A549 (cell line): ENCODE measurements at regions of chr2 and their contacts with region 1.

Region 1: GRCh38 chr2:37414470-37414949 is 70.1 kb downstream of the QPCT start:
- DNase-seq: peak; percentile 68 to 69
- ATAC-seq: peak; percentile 90 to 93
- H3K4me3 ChIP-seq: no peak overlapping the region
- H3K27ac ChIP-seq: peak overlapping the region; percentile 8 to 15; a peak in 2 of 6 replicates
- H3K4me1 ChIP-seq: peaks cover 6% of the 10 kb centered on the region; the same call in 2 of the 3 replicates
- CTCF ChIP-seq: peak; percentile 99
- EP300 ChIP-seq: no peak
- POLR2A ChIP-seq: no peak
- RAD21 ChIP-seq: peak; percentile 99

Region 2: GRCh38 chr2:37344453-37345361 is 69.8 kb before region 1 on chr2 and contains the start of gene QPCT:
- CTCF ChIA-PET with region 1: no interaction called
- POLR2A ChIA-PET with region 1: no interaction called
- DNase-seq: peak; percentile 60 to 87
- ATAC-seq: peak; percentile 83 to 87
- H3K4me3 ChIP-seq: peak within 1 kb of the TSS; percentile 71
- H3K27ac ChIP-seq: peak within 1 kb of the TSS; percentile 69 to 87
- H3K4me1 ChIP-seq: peaks cover 19% of the 10 kb centered on the region
- CTCF ChIP-seq: no peak
- EP300 ChIP-seq: no peak
- POLR2A ChIP-seq: peak; percentile 32; the same call in 1 of the 2 replicates
- RAD21 ChIP-seq: no peak; a peak in 1 of 5 replicates
- polyA plus RNA-seq, gene QPCT: 42.7 and 68.7 TPM in 2 replicates

Region 3: DNA sequence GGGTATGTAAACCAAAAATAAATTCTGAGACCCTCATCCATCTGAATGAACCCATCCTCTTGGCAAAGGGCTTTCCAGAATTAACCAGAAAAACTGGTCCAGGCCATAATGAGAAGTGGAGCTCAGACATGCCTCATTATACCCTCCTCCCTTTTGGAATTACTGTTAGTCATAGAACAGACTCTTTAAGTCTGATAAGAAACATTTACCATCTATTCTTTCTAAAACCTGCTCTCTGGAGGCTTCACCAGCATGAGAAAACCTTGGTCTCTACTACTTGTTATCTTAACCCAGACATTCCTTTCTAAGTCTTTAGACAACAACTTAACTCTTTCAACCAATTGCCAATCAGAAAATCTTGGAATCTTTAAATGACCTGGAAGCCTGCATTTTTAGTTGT is 12.7 kb after region 1 on chr2:
- CTCF ChIA-PET with region 1: interaction called, 24 read pairs
- POLR2A ChIA-PET with region 1: no interaction called
- DNase-seq: no peak
- ATAC-seq: no peak
- H3K4me3 ChIP-seq: no peak overlapping the region
- H3K27ac ChIP-seq: no peak overlapping the region
- H3K4me1 ChIP-seq: no peaks in the 10 kb centered on the region
- CTCF ChIP-seq: no peak
- EP300 ChIP-seq: no peak
- POLR2A ChIP-seq: no peak
- RAD21 ChIP-seq: no peak

Region 4: GRCh38 chr2:37537316-37537715 is 122.8 kb after region 1 on chr2:
- CTCF ChIA-PET with region 1: interaction called, 19 read pairs
- POLR2A ChIA-PET with region 1: no interaction called
- DNase-seq: no peak
- ATAC-seq: no peak
- H3K4me3 ChIP-seq: no peak overlapping the region
- H3K27ac ChIP-seq: no peak overlapping the region
- H3K4me1 ChIP-seq: peaks cover 11% of the 10 kb centered on the region
- CTCF ChIP-seq: no peak
- EP300 ChIP-seq: no peak
- POLR2A ChIP-seq: no peak
- RAD21 ChIP-seq: no peak

Region 5: DNA sequence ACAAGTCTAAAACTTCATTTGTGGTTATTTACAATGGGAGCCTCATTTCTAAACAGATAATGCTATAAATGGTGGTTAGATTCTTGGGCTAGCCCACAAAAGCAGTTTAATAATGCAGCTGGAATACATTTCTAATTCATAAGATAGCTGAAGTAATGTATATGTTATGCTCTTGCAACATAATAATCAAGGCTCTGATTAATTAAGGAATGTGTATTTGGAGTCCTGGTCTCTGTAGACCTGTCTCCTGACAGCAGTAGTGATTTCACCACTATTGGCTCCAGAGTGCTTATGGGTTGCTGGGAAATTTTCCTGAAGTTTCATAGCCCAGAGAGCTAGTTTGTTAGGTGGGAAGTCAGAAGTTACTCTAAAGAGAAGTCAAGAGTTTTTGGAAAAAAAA is 278.2 kb after region 1 on chr2:
- CTCF ChIA-PET with region 1: interaction called, 10 read pairs
- POLR2A ChIA-PET with region 1: no interaction called
- DNase-seq: no peak
- ATAC-seq: no peak
- H3K4me3 ChIP-seq: no peak overlapping the region
- H3K27ac ChIP-seq: no peak overlapping the region
- H3K4me1 ChIP-seq: peaks cover 23% of the 10 kb centered on the region
- CTCF ChIP-seq: no peak
- EP300 ChIP-seq: no peak
- POLR2A ChIP-seq: no peak
- RAD21 ChIP-seq: no peak

Region 6: DNA sequence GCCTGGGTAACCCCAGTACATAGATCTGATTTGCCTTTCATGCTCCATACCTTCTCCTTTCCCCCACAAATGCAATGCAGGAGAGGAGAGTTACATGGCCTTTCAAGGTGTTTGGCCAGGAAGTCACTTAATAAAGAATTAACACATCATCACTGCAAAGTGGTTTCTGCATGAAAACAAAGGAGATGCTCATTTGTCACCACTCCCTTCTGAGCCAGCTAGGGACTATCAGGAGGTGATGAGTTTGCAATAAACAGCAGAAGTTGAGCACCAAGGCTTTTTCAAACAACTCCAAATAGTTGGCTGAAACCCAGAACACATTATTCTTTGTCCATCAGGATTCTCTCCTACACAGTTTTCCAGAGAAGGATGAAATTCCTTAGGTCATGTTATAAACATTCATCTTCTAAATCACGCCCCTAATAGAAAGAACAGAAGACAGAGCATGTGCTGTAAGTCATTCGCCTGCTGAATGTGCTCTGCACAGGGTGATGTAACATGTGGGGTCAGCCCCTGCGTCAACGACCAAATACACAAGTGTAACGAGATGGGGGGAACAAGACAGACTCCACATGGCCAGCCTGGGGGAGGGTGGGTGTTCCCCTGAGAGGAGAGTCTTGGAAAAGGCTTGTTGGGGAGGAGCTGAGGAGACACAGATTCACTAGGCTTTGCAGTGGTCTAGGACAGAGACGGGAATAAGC is 423.3 kb after region 1 on chr2:
- CTCF ChIA-PET with region 1: interaction called, 433 read pairs
- POLR2A ChIA-PET with region 1: interaction called, 7 read pairs
- DNase-seq: no peak
- ATAC-seq: no peak
- H3K4me3 ChIP-seq: no peak overlapping the region
- H3K27ac ChIP-seq: no peak overlapping the region
- H3K4me1 ChIP-seq: peaks cover 3% of the 10 kb centered on the region; the same call in 1 of the 3 replicates
- CTCF ChIP-seq: no peak
- EP300 ChIP-seq: no peak
- POLR2A ChIP-seq: no peak
- RAD21 ChIP-seq: no peak

Region 7: DNA sequence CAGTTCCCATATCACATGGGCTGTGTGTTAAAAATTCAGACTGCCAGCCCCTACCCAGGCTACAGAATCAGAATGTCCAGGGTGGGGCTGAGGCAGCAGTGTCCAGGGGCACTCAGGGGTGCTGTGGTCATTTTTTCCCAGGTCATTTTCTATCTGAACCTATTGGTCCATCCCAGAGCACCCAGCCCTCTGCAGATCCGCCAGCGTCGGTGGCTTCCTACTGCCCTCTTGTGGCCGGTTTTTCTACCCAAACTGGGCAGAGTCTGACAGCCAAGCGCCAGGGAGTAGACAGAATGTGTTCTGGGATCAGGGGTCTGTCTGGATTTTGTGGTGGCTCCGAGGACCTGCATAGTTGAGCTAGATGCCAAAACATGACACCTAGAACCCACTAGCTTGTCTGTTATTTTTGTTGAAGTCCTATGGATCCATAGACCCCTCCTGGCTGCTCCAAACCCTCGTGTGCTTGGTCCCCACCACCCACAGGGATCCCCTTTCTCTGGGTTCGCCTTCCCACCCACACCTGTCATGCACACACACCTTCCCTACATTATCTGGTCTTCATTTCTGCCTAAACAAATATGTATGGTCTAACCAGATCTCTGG is 476.5 kb after region 1 on chr2:
- CTCF ChIA-PET with region 1: interaction called, 25 read pairs
- POLR2A ChIA-PET with region 1: no interaction called
- DNase-seq: peak; percentile 79 to 90
- ATAC-seq: peak; percentile 98 to 100
- H3K4me3 ChIP-seq: no peak overlapping the region
- H3K27ac ChIP-seq: no peak overlapping the region
- H3K4me1 ChIP-seq: no peaks in the 10 kb centered on the region
- CTCF ChIP-seq: peak; percentile 91
- EP300 ChIP-seq: no peak
- POLR2A ChIP-seq: no peak
- RAD21 ChIP-seq: peak; percentile 86 to 94